GM23248 (cell line): ENCODE measurements at regions of chr2 and their contacts with region 1.

Region 1: GRCh38 chr2:47867205-47867604 is 39.1 kb downstream of the FBXO11 start:
- DNase-seq: peak; percentile 91
- H3K4me3 ChIP-seq: peak overlapping the region; percentile 11; the same call in 1 of the 2 replicates
- H3K27ac ChIP-seq: peak overlapping the region; percentile 61
- H3K4me1 ChIP-seq: peaks cover 33% of the 10 kb centered on the region
- H3K27me3 ChIP-seq: no peaks in the 10 kb centered on the region

Region 2: DNA sequence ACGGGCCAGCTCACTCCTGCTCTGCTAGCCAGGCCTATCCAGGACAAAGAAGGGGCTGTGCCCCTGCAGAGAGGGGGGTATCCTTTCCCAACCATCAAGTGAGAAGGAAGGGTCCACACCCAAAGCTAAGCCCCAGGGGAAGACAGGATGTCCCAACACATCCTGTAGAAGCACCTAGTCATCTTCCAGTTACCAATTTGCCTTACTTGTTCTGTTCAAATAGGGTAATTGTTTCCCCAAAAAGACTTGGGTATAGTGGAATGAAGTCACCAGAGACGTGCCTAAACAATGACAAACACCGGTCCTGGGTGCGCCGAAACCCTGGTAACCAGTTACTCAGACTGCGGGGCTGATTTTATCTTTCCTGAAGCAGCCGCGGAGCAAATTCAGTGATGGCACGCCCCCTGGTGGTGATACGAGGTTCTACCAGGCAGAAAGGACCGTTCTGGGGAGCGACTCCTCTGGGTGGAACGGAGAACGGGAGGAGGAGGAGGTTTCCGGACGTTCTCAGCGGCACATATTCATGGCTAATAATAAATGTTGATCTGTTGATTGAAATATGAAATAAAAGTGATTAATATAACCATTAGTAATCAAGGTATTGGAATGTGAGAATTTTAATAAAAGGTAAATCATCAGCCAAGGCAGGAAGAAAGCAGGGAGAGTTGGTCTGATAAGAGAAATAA is 553.5 kb after region 1 on chr2:
- in situ Hi-C with region 1: loop called (anchors 25 kb)
- DNase-seq: peak; percentile 98
- H3K4me3 ChIP-seq: no peak overlapping the region
- H3K27ac ChIP-seq: peak overlapping the region; percentile 71
- H3K4me1 ChIP-seq: peaks cover 15% of the 10 kb centered on the region
- H3K27me3 ChIP-seq: no peaks in the 10 kb centered on the region

Region 3: DNA sequence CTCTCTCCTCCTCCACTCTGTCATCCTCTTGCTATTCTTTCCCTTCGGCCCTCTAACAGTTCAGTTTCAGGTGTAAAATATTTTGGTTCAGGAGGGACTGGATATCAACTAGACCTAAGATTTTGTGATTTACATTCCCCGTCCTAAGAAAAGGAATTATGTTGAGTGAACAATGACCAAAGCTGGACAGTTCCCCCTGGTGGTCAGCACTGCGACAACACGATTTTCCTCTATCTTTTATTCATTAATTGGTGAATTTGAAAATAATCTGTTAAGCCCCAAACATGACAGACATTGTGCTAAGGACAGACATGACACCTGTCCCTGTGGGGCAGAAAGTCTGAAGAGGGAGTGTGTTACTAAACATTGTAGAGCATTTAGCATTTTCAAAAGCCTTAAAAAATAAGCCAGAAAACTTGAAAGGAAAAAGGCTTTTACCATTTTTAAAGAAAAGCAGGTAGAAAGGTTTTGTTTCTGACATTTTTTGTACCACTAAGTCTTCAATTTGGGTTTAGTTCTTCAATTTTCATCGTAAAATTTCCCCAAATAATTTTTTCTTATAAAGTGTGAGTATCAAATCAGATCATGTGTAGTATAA is 722.1 kb after region 1 on chr2:
- in situ Hi-C with region 1: loop called (anchors 25 kb)
- DNase-seq: peak; percentile 66
- H3K4me3 ChIP-seq: no peak overlapping the region
- H3K27ac ChIP-seq: no peak overlapping the region
- H3K4me1 ChIP-seq: no peaks in the 10 kb centered on the region
- H3K27me3 ChIP-seq: no peaks in the 10 kb centered on the region